Panc1 (cell line): ENCODE measurements at regions of chr1 and their contacts with region 1.

Region 1: DNA sequence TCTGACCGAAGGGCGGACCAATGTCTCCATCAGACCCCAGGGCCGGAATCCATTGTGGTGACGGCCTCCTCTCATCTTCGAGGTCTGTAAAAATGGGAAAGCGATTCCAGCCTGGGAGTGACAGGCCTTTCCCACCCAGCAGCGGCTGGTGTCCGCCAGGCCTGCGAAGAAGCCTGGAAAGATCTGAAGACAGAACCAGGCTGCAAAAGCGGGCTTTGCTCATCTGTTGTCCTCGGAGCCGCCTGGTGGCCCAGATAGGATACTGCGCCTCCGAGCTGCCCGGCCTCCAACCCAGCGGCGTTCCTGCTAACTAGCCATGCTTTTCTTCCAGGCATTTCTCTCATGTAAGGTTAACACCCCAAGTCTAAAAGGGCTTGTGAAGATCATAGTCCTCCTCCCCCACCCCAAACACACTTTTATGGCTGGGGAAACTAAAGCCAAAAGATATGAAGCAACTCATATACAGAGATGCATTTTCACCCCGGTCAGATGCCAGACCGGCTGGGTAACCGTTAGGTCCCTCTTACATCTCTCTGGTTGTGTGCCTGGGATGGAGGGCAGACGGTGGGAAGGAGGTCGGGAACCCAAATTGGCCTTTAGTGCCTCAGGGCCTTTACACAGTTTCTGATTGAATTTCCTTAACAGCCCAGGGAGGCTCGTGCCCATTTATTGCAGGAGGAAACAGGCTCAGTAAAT is 1.9 kb upstream of the DHRS3 start:
- DNase-seq: peak; percentile 69
- ATAC-seq: peak; percentile 69
- H3K4me3 ChIP-seq: peak overlapping the region; percentile 92 to 95
- H3K27ac ChIP-seq: peak overlapping the region; percentile 95
- H3K4me1 ChIP-seq: peaks cover 47% of the 10 kb centered on the region
- H3K27me3 ChIP-seq: no peaks in the 10 kb centered on the region
- CTCF ChIP-seq: peak; percentile 97

Region 2: DNA sequence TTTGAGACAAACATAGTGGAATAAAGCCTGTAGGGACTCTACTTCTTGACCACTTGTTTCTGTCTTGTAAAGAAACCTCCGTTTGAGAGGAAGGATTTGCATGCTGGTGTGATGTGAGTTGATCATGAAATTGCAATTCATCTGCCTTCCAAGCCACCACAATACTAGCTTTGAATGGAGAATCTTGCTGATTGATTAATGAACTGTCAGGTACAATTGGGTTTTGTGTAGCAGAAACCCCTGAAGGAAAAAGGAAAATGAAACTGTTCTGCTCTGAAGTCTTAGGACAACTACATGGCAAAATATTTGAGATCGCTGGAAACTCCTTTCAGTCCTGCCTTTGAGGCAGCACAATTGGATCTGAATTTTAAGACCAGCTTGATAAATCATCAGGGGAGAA is 299.4 kb before region 1 on chr1:
- CTCF ChIA-PET with region 1: interaction called, 7 read pairs
- POLR2A ChIA-PET with region 1: no interaction called
- in situ Hi-C with region 1: no loop called
- intact Hi-C with region 1: loop called (anchors 5 kb)
- DNase-seq: no peak
- ATAC-seq: no peak
- H3K4me3 ChIP-seq: no peak overlapping the region
- H3K27ac ChIP-seq: no peak overlapping the region
- H3K4me1 ChIP-seq: no peaks in the 10 kb centered on the region
- H3K27me3 ChIP-seq: no peaks in the 10 kb centered on the region
- CTCF ChIP-seq: no peak

Region 3: DNA sequence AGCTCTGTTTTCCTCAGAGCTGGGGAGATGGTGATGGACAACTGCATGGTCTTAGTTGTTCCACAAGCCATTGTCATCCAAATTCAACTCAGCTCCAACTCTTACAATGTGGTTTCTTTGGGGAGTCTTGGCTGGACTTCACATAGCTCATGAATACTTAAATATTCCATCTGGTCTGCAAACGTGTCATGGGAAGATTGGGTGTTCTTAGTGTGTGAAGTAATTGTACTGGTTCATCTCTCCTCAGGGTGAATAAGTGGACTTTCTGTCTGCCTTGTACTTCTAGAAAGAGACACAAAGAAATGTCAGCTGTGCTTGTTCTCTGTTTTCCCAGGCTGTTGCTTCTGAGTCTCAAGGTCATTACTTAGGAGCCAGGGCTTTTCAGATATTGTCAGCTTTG is 283.5 kb before region 1 on chr1:
- CTCF ChIA-PET with region 1: no interaction called
- POLR2A ChIA-PET with region 1: interaction called, 15 read pairs
- in situ Hi-C with region 1: no loop called
- intact Hi-C with region 1: no loop called
- DNase-seq: no peak
- ATAC-seq: no peak
- H3K4me3 ChIP-seq: no peak overlapping the region
- H3K27ac ChIP-seq: no peak overlapping the region; the same call in 1 of the 2 replicates
- H3K4me1 ChIP-seq: no peaks in the 10 kb centered on the region; the same call in 1 of the 2 replicates
- H3K27me3 ChIP-seq: no peaks in the 10 kb centered on the region
- CTCF ChIP-seq: no peak

Region 4: DNA sequence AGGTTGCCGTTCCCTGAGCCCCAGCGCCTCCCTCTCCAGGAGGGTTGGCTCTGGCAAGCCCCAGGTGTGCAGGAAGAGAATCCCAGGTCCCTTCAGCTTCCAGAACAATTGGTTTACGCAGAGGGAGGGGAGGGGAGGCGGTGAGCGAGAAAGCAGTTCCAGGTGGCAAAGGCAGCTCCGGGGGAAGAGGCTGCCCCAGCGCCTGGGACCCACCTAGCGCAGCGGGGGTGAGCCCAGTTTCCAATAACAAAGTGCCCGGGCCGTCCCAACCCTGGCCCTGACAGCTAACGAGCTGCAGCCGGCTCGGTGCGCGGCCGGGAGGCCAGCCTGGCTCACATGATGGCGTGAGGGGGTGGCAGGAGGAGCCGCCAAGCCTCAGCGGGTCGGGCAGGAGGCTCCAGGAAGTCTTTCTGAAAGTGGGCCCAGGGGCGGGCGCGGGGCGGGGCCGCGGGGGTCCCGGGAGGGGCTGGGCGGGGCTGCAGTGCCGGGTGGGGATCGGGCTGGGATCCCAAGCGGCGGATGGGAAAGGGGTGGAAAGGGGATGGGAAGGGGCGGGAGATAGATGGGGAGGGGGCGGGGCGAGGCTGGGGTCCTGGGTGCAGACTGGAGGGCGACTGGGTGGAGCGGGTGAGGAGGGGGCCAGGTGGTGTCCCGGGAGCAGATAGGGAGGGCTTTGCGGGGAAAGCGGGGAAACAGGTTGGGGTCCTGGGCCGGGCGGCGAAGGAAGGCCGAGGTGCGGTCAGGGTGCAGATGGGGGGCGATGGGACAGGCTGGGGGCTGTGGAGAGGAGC is 24.8 kb before region 1 on chr1:
- CTCF ChIA-PET with region 1: interaction called, 4 read pairs
- POLR2A ChIA-PET with region 1: interaction called, 4 read pairs
- in situ Hi-C with region 1: no loop called
- intact Hi-C with region 1: loop called (anchors 2 kb)
- DNase-seq: no peak
- ATAC-seq: peak; percentile 13
- H3K4me3 ChIP-seq: peak overlapping the region; percentile 18 to 37
- H3K27ac ChIP-seq: peak overlapping the region; percentile 96
- H3K4me1 ChIP-seq: peaks cover 86% of the 10 kb centered on the region
- H3K27me3 ChIP-seq: no peaks in the 10 kb centered on the region
- CTCF ChIP-seq: no peak

Region 5: GRCh38 chr1:12608311-12608957 is 11.5 kb before region 1 on chr1:
- CTCF ChIA-PET with region 1: no interaction called
- POLR2A ChIA-PET with region 1: no interaction called
- in situ Hi-C with region 1: no loop called
- intact Hi-C with region 1: no loop called
- DNase-seq: no peak
- ATAC-seq: no peak
- H3K4me3 ChIP-seq: no peak overlapping the region
- H3K27ac ChIP-seq: peak overlapping the region; percentile 76
- H3K4me1 ChIP-seq: peaks cover 51% of the 10 kb centered on the region
- H3K27me3 ChIP-seq: no peaks in the 10 kb centered on the region
- CTCF ChIP-seq: no peak